MCF 10A (cell line): ENCODE measurements at regions of chr7 and their contacts with region 1.

Region 1: DNA sequence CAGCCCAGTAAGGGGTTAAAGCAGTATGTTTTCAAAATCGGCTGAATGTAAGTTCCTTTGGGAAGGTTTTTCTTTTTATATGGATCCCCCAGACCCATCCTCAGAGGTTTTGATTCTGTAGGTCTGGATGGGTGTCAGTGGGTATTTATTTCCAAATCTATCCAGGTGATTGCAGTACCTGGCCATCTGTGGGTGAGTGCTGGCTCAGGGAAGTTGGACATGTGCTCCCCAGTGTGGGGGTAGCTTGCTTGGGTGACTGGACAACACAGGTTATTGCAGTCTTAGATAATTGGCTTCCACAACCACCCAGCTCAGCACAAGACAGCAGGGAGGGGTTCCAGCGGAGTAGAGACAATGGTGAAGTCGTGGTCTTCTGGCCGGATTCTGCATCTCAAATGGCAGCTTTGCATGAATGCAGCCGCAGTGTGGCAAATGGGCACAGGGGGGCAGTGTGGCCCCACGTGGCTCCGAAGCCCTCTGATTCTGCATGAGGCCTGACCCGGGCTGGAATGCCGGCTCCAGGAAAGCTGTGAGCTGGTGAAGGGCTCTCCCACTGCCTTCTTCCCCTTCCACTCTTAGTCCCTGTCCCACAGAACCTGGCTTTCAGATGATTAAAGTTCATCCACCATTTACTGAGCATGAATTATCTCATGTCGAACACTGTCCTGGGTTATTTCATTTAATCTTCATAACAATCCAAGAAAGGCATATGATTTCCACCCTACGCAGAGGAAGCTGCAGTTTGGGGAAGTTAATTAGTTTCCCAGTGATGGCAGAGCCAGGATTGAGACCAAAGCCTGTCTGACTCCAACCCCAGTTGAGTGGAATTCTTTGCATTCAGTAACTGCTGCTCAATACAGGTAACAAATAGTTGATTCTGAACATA is 64.5 kb upstream of the SYPL1 start:
- DNase-seq: peak; percentile 79
- H3K4me3 Mint-ChIP-seq: no peak overlapping the region
- H3K27ac Mint-ChIP-seq: no peak overlapping the region
- H3K4me1 Mint-ChIP-seq: peaks cover 16% of the 10 kb centered on the region
- H3K27me3 Mint-ChIP-seq: peaks cover 11% of the 10 kb centered on the region
- CTCF ChIP-seq: peak; percentile 92

Region 2: DNA sequence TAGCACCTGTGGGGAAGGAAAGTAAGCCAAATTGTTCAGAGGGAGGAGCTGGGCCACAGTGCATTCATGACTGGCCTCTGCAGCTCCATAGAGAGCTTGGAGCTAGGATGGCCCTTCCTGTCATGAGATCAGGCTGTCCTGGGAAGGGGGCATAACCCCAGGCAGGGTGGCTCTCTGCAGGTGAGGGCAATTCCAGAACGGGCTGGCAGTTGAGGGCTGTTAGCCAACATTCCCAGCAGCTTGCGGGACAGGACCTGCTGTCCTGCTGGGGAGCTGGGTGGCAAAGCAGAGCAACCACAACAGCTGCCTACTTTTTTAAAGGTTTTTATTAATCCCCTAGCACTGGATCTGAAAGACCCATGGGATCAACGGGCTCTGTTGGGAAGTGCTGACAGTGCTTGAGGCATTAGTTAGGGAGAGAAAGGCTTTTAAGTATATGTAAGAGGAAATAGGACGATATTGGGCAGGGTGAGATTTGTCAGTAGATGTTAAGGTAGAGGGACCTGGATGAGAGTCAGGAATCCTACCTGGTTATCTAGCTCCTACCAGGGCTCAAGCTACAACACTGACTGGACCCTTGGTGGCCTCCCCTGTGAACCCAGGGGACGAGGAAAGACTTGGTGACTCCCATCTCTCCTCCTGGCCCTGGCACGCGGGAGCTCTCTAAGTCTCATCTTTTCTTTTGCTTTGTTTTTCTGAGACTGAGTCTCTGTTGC is 30.3 kb after region 1 on chr7:
- CTCF ChIA-PET with region 1: interaction called, 11 read pairs
- POLR2A ChIA-PET with region 1: interaction called, 3 read pairs
- intact Hi-C with region 1: no loop called
- DNase-seq: peak; percentile 53
- H3K4me3 Mint-ChIP-seq: no peak overlapping the region
- H3K27ac Mint-ChIP-seq: peak overlapping the region; percentile 23
- H3K4me1 Mint-ChIP-seq: peaks cover 12% of the 10 kb centered on the region
- H3K27me3 Mint-ChIP-seq: no peaks in the 10 kb centered on the region
- CTCF ChIP-seq: no peak

Region 3: DNA sequence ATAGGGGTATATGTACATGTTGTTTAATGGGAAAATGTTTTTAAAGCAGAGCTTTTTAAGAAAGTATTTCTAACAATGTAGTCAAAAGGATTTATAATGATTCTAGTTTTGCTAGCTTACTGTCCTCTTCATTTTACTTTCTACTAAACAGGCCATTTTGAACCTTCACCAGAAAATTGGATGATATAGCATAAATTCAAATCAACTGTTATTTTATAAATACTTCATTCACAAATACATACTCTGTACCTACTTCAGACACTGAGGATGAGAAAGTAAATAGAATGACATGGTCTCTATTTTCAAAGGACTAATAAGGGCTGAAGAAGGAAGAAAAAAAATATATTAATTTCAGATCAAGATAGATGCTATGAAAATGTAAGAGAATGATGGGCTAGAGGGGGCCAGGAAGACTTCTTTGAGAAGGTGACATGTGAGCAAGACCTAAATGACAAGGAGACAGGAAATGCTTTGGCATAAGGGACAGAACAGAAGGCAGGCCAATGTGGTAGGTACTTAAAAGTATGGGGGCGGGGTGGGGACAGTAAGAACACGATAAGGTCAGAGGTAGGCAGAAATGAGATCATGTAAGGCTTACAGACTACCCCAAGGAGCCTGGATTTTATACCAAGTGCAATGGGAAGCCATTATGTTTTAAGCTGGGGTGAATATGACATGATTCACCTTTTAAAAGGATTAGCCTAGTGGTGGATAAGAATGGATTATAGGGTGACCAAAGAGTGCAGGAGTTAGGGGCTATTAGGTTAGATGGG is 103.0 kb after region 1 on chr7:
- CTCF ChIA-PET with region 1: interaction called, 18 read pairs
- POLR2A ChIA-PET with region 1: interaction called, 5 read pairs
- intact Hi-C with region 1: loop called (anchors 2 kb)
- DNase-seq: no peak
- H3K4me3 Mint-ChIP-seq: peak overlapping the region; percentile 100
- H3K27ac Mint-ChIP-seq: peak overlapping the region; percentile 28
- H3K4me1 Mint-ChIP-seq: peaks cover 29% of the 10 kb centered on the region
- H3K27me3 Mint-ChIP-seq: no peaks in the 10 kb centered on the region
- CTCF ChIP-seq: no peak

Region 4: DNA sequence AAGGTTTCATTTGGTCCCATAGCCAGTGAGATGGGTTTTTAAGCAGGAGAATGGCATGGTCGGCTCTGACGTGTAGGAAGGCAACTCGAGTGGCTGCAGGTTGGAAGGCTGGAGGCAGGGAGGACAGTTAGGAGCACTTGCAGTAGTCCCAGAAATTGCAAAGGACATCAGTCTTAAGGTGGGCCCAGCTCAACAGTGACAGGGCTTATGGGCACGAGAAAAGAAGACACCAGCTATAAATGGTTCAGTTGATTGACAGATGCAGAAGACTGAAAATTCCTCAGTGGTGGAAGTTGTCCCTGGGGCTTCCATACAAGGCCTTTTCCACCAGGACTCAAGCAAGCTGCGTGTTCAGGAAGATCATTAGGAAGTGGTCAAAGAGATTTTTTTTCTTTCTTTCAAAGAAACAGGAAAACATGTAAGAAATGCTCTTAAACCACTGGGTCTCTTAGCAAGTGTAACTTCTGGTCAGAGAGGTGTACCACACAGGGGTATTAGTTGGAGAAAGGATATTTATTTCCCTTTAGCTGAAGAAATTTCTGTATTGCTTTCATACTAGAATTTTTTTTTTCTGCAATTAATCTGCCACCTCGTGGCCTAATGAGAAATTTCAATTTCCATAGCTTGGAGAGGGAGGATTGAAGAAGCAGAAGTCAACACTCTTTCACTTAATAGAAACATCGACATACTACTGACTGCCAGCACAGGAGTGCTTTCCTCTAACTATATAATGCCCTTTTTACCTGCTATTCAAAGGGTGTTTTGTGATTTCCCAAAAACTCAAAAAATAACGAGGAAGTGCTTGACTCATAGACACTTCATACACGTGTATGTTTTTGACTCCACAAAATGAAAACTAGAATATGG is 285.6 kb after region 1 on chr7:
- CTCF ChIA-PET with region 1: interaction called, 346 read pairs
- POLR2A ChIA-PET with region 1: interaction called, 39 read pairs
- intact Hi-C with region 1: loop called (anchors 1 kb)
- DNase-seq: peak; percentile 61
- H3K4me3 Mint-ChIP-seq: no peak overlapping the region
- H3K27ac Mint-ChIP-seq: no peak overlapping the region
- H3K4me1 Mint-ChIP-seq: no peaks in the 10 kb centered on the region
- H3K27me3 Mint-ChIP-seq: no peaks in the 10 kb centered on the region
- CTCF ChIP-seq: peak; percentile 55

Region 5: GRCh38 chr7:106717955-106718871 is 541.6 kb after region 1 on chr7:
- CTCF ChIA-PET with region 1: interaction called, 3 read pairs
- POLR2A ChIA-PET with region 1: no interaction called
- intact Hi-C with region 1: loop called (anchors 5 kb)
- DNase-seq: peak; percentile 93
- H3K4me3 Mint-ChIP-seq: no peak overlapping the region
- H3K27ac Mint-ChIP-seq: no peak overlapping the region
- H3K4me1 Mint-ChIP-seq: no peaks in the 10 kb centered on the region
- H3K27me3 Mint-ChIP-seq: no peaks in the 10 kb centered on the region
- CTCF ChIP-seq: no peak